ENCODE measurements at regions of chr7 and their contacts with region 1.

Region 1: DNA sequence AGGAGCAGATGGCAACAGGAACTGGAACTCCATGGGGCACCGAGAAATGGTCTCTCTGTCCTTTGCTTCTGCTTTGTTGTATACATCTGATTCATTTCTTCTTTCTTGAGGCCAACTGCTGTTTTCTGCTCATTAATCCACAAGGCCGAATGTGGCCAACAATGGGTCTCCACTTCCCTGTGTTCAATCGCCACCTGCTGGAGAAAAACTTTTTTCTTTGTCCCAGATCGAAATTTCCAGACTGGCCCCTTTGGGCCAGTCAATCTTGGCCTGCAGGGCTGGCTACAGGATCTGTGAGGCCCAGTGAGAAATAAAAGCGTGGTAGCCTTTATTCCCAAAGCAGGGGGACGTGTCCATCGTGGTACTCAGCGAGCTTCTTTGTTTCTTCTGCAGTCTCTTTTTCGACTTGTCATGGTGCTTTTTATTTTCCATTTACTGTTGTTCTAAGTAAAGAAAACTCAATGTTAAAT is 58.8 kb downstream of the PARP12 start:
- DNase-seq: peak; percentile 43
- ATAC-seq: peak; percentile 48
- H3K4me3 ChIP-seq: no peak overlapping the region
- H3K27ac ChIP-seq: no peak overlapping the region
- H3K4me1 ChIP-seq: peaks cover 31% of the 10 kb centered on the region
- H3K27me3 ChIP-seq: peaks cover 2 to 4% of the 10 kb centered on the region in 2 experiments; a peak in 3 of 5 replicates
- CTCF ChIP-seq: peak; percentile 66
- EP300 ChIP-seq: no peak
- POLR2A ChIP-seq: no peak
- RAD21 ChIP-seq: 0 out of 2 replicates have a peak, but pooled peaks have one; percentile 28

Region 2: GRCh38 chr7:139505563-139505962 is 498.4 kb before region 1 on chr7:
- CTCF ChIA-PET with region 1: interaction called, 8 read pairs
- POLR2A ChIA-PET with region 1: no interaction called
- in situ Hi-C with region 1: no loop called
- intact Hi-C with region 1: loop called (anchors 1 kb)
- DNase-seq: peak; percentile 10
- ATAC-seq: peak; percentile 77
- H3K4me3 ChIP-seq: no peak overlapping the region
- H3K27ac ChIP-seq: no peak overlapping the region
- H3K4me1 ChIP-seq: peaks cover 4% of the 10 kb centered on the region; the same call in 1 of the 2 replicates
- H3K27me3 ChIP-seq: peaks cover 0 to 19% of the 10 kb centered on the region in 2 experiments; a peak in 3 of 5 replicates
- CTCF ChIP-seq: peak; percentile 64
- EP300 ChIP-seq: no peak
- POLR2A ChIP-seq: no peak
- RAD21 ChIP-seq: no peak

Region 3: DNA sequence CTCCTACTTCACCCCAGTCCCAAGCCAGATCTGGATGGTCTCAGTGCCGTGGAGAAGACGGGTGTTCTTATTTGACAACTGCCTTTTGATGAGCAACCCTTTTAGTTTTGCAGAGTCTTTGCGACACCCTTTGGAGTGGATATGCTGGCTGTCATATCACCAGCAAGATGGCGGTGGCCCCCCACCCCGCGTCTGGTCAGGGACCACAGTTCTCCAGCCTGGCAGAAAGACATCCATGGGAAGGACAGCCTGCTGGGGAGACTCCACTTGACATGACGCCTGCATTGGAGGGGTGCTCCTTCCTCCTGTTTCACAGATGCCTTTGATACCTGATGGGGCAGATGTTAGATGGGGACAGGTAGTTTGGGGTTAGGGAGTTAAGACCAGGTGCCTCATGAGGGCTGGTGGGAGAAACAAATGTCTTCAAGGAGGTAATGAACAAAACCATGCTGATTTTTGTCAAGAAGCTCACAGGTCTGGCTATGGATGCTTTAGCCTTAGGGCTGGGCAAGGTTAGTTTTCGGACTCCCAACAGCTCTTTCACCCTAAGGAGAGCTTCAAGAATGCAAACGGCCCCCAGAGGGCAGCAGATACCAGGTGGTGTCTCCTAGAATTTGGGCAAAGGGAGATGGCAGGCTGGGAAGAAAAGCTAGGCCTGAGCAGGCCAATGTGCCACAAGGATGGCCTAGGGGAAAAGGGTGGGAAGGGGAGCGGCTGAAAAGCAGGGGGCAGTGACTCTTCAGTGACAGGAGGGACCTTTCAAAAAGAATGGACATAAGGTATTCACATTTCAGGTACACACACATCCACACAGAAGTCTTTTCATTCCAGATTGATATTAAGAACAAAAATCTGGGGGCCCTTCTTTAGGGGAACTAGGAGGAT is 385.2 kb before region 1 on chr7:
- CTCF ChIA-PET with region 1: interaction called, 15 read pairs
- POLR2A ChIA-PET with region 1: no interaction called
- in situ Hi-C with region 1: loop called (anchors 10 kb)
- intact Hi-C with region 1: loop called (anchors 1 kb)
- DNase-seq: peak; percentile 35
- ATAC-seq: peak; percentile 46; the same call in 2 of the 3 replicates
- H3K4me3 ChIP-seq: no peak overlapping the region
- H3K27ac ChIP-seq: no peak overlapping the region
- H3K4me1 ChIP-seq: no peaks in the 10 kb centered on the region
- H3K27me3 ChIP-seq: no peaks in the 10 kb centered on the region
- CTCF ChIP-seq: peak; percentile 46
- EP300 ChIP-seq: no peak
- POLR2A ChIP-seq: no peak
- RAD21 ChIP-seq: no peak

Region 4: GRCh38 chr7:139777948-139778841 is 225.8 kb before region 1 on chr7 and contains the start of gene HIPK2:
- CTCF ChIA-PET with region 1: interaction called, 12 read pairs
- POLR2A ChIA-PET with region 1: no interaction called
- in situ Hi-C with region 1: loop called (anchors 5 kb)
- intact Hi-C with region 1: loop called (anchors 1 kb)
- DNase-seq: peak; percentile 56
- ATAC-seq: peak; percentile 88
- H3K4me3 ChIP-seq: peak within 1 kb of the TSS; percentile 86 to 94 (median 86)
- H3K27ac ChIP-seq: peak within 1 kb of the TSS; percentile 92
- H3K4me1 ChIP-seq: peaks cover 67% of the 10 kb centered on the region
- H3K27me3 ChIP-seq: no peaks in the 10 kb centered on the region; a peak in 1 of 5 replicates
- CTCF ChIP-seq: no peak
- EP300 ChIP-seq: no peak
- POLR2A ChIP-seq: peak; percentile 30 to 51; a peak in 2 of 4 replicates
- RAD21 ChIP-seq: 0 out of 2 replicates have a peak, but pooled peaks have one; percentile 11
- total RNA-seq, gene HIPK2: 14.4 and 25.9 TPM in 2 replicates

Region 5: DNA sequence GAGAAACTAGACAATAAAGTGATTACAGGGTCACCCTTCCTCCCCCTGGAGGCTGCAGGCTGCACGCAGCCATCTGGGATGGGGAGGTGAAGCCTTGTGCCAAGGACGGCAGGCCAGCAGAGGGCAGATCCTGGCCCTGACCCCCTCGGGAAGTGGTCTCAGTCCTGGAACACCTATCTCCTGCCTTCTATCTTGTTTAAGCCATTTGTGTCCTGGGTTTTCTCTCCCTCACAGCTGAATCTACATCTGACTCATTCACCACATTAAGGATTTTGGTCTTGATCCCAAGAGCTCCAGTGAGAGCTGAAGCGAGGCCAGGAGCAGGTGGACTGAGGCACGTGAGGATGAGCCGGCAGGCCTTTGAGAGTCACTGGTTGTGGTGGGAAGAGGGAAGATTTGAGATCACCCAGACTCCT is 75.2 kb after region 1 on chr7:
- CTCF ChIA-PET with region 1: no interaction called
- POLR2A ChIA-PET with region 1: no interaction called
- in situ Hi-C with region 1: no loop called
- intact Hi-C with region 1: loop called (anchors 5 kb)
- DNase-seq: peak; percentile 57
- ATAC-seq: peak; percentile 87
- H3K4me3 ChIP-seq: no peak overlapping the region
- H3K27ac ChIP-seq: no peak overlapping the region
- H3K4me1 ChIP-seq: peaks cover 43% of the 10 kb centered on the region
- H3K27me3 ChIP-seq: peaks cover 0 to 5% of the 10 kb centered on the region in 2 experiments; a peak in 1 of 5 replicates
- CTCF ChIP-seq: peak; percentile 85
- EP300 ChIP-seq: no peak
- POLR2A ChIP-seq: no peak
- RAD21 ChIP-seq: peak; percentile 71

Region 6: GRCh38 chr7:140144821-140145220 is 140.9 kb after region 1 on chr7:
- CTCF ChIA-PET with region 1: no interaction called
- POLR2A ChIA-PET with region 1: no interaction called
- in situ Hi-C with region 1: no loop called
- intact Hi-C with region 1: no loop called
- DNase-seq: no peak
- ATAC-seq: no peak
- H3K4me3 ChIP-seq: no peak overlapping the region
- H3K27ac ChIP-seq: no peak overlapping the region
- H3K4me1 ChIP-seq: peaks cover 14% of the 10 kb centered on the region; the same call in 1 of the 2 replicates
- H3K27me3 ChIP-seq: no peaks in the 10 kb centered on the region
- CTCF ChIP-seq: no peak
- EP300 ChIP-seq: no peak
- POLR2A ChIP-seq: no peak
- RAD21 ChIP-seq: no peak

Region 7: DNA sequence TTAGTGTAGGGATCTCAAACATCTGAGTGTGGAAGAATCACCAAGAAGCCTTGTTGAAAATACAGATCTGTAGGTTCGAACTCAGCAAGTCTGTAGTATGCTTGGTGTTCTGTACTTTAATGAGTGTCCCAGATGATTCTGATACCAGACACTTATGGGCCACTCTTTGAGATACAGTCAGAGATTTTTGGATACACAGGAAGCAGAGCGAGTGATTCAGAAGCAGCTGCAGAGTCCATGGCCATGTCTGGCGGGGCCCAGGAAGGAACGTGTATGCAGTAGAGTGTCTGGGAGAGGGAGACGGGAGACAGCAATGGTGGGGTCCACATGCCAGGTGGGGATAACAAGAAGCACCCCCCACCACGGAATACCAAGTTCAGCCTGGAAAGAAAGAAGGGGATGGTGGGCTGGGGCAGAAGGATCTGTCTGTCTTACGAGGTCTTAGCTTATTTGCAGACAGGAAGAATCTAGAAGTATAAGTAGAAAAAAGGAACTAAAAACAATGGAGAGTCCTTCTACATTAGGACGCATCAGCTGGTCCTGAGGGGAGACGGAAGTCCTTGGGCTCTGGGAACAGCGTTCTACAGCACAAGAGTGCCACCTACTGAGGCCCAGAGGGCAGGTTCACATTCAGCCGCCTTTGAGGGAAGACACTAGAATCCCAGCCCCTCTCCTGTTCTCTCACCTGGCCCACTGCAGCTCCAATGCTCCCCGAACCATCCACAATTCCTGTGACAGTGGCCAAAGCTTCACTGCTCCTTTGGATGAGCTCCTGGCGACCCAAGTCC is 339.0 kb after region 1 on chr7:
- CTCF ChIA-PET with region 1: no interaction called
- POLR2A ChIA-PET with region 1: no interaction called
- in situ Hi-C with region 1: no loop called
- intact Hi-C with region 1: loop called (anchors 1 kb)
- DNase-seq: peak; percentile 29
- ATAC-seq: peak; percentile 85
- H3K4me3 ChIP-seq: no peak overlapping the region
- H3K27ac ChIP-seq: no peak overlapping the region
- H3K4me1 ChIP-seq: no peaks in the 10 kb centered on the region
- H3K27me3 ChIP-seq: no peaks in the 10 kb centered on the region
- CTCF ChIP-seq: peak; percentile 85
- EP300 ChIP-seq: no peak
- POLR2A ChIP-seq: no peak
- RAD21 ChIP-seq: peak; percentile 64; the same call in 1 of the 2 replicates

Region 8: DNA sequence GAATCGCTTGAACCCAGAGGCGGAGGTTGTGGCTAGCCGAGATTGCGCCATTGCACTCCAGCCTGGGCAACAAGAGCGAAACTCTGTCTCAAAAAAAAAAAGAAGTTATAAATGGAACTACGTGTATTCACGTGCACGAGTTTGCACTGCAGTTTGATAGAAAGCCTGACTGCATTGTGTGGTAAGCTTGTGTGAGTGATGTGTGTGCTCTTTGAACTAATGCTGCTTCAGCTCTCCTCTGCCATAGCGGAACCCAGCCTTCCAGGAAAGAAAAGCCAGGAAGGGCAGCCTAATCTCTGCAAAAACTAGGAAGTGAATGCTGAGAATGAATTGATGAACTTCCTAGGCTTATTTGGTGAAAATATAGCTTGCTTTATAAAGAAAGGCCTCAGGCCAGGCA is 490.9 kb after region 1 on chr7:
- CTCF ChIA-PET with region 1: no interaction called
- POLR2A ChIA-PET with region 1: no interaction called
- in situ Hi-C with region 1: no loop called
- intact Hi-C with region 1: no loop called
- DNase-seq: peak; percentile 27
- ATAC-seq: peak; percentile 68
- H3K4me3 ChIP-seq: no peak overlapping the region
- H3K27ac ChIP-seq: no peak overlapping the region
- H3K4me1 ChIP-seq: 0 out of 2 replicates have a peak, but pooled peaks cover 7% of the 10 kb centered on the region
- H3K27me3 ChIP-seq: no peaks in the 10 kb centered on the region
- CTCF ChIP-seq: no peak
- EP300 ChIP-seq: no peak
- POLR2A ChIP-seq: no peak
- RAD21 ChIP-seq: no peak